WTC11 (cell line): ENCODE measurements at regions of chr5 and their contacts with region 1.

Region 1: DNA sequence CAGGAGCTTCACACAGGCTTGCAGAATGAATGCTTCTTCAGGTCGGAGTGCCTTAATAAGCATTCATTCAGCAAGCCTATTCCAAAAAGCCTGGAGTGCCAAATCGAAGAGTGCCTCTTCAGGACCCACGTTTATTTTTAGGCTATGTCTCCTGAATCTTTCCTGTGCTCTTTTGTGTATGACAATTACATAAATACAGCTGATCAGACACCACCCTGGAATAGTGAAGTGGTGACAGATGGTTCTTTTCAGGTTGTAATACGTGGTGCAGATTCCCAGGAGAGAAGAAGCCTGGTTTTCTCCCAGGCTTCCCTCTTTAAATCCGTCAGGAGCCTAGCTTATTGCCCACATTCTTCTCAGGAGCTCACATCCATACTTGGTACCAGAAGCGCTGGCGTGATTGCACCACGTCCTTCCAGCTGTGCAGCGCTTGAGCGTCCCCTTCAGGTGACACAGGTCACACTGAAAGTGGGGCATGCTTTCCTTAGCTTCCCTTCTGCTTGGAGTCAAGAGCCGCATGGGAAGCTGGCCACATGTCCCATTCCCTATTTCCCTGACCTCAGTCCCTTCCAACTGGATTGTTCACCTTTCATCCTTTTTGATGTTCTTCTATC is 123.1 kb downstream of the ADCY2 start:
- DNase-seq: peak; percentile 79
- ATAC-seq: peak; percentile 77
- H3K4me3 Mint-ChIP-seq: no peak overlapping the region
- H3K27ac Mint-ChIP-seq: peak overlapping the region; percentile 67
- H3K4me1 Mint-ChIP-seq: peaks cover 59% of the 10 kb centered on the region
- H3K27me3 Mint-ChIP-seq: no peaks in the 10 kb centered on the region
- CTCF ChIP-seq: peak; percentile 59

Region 2: GRCh38 chr5:7078901-7079300 is 440.2 kb before region 1 on chr5:
- CTCF ChIA-PET with region 1: interaction called, 15 read pairs
- POLR2A ChIA-PET with region 1: no interaction called
- DNase-seq: peak; percentile 50
- ATAC-seq: peak; percentile 68
- H3K4me3 Mint-ChIP-seq: peak overlapping the region; percentile 25; the same call in 1 of the 2 replicates
- H3K27ac Mint-ChIP-seq: 0 out of 2 replicates have a peak overlapping the region, but pooled peaks have one; percentile 12
- H3K4me1 Mint-ChIP-seq: peaks cover 50% of the 10 kb centered on the region
- H3K27me3 Mint-ChIP-seq: no peaks in the 10 kb centered on the region
- CTCF ChIP-seq: no peak

Region 3: DNA sequence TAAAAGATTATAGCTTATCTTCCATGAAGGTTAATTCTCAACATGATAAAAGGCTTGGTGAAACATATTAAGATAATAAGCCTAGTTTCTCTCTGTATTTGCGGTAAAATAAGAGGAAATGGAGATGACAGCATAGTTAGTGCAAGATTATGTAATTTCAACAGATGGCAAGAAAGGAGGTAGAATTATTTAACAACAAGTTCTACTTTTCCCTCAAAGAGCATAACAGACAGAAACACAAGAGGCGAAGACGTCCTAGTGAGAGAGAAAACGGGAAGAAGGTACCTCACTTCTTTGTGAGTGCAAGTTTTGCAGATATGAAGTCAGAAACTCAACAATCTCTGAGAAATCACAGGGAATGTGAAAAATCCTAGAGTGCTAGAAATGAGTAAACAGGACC is 267.9 kb before region 1 on chr5:
- CTCF ChIA-PET with region 1: no interaction called
- POLR2A ChIA-PET with region 1: no interaction called
- DNase-seq: no peak
- ATAC-seq: no peak
- H3K4me3 Mint-ChIP-seq: no peak overlapping the region
- H3K27ac Mint-ChIP-seq: no peak overlapping the region
- H3K4me1 Mint-ChIP-seq: peaks cover 6% of the 10 kb centered on the region; the same call in 1 of the 2 replicates
- H3K27me3 Mint-ChIP-seq: no peaks in the 10 kb centered on the region; the same call in 1 of the 2 replicates
- CTCF ChIP-seq: no peak

Region 4: DNA sequence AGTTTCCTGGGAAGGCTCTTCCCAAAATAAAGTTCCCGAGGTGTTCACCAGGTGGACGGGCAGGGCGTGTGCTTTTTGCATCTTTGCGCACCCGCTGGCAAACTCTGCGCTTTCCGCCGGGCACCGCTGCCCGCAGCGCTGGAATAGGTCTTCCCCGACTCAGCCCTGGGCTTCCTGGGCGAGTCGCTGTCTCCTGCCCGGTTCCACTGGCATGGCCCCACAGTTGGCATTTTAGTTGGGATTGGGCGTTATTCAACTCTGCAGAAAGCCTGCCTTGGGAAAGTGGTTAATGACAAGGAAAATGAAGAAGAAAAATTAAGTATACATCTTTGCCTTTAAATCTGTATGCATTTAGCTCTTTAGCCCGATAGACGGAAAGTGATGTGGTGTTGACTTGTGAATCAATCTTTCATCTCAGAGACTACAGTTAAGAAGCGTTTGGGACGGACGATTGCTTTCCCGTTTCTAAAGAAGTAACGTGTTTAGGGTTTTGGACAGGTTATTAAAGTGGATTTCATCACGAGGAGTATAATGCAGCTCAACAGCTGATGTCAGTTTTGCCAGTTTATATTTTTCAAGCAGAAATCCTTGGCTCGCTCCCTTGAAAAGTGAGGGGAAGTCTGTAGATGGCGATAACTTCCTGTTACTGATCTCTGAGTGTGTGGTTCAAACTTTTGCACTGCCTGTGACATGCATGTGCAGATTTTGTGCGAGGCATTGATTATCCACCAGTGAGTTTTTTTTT is 122.2 kb before region 1 on chr5:
- CTCF ChIA-PET with region 1: interaction called, 40 read pairs
- POLR2A ChIA-PET with region 1: interaction called, 3 read pairs
- DNase-seq: peak; percentile 27
- ATAC-seq: no peak
- H3K4me3 Mint-ChIP-seq: peak overlapping the region; percentile 90
- H3K27ac Mint-ChIP-seq: peak overlapping the region; percentile 73
- H3K4me1 Mint-ChIP-seq: peaks cover 72% of the 10 kb centered on the region
- H3K27me3 Mint-ChIP-seq: no peaks in the 10 kb centered on the region; the same call in 1 of the 2 replicates
- CTCF ChIP-seq: no peak

Region 5: DNA sequence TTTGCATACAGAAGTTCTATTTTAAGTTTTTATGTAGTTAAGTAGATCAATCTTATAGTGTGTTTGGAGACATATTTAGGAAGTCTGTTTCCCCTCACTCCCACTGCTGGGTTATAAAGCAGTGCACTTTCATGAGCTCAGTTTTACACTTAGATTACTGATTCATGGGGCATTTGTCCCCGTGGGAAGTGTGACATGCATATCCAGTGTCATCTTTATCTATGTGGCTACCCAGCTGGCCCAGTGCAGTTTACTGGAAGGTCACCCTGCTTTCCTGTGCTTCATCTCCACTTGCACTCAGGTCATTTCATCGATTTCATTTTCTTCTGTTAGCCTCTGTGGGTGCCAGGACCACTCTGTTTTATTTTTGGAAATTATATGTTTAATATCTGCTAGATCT is 74.0 kb before region 1 on chr5:
- CTCF ChIA-PET with region 1: interaction called, 10 read pairs
- POLR2A ChIA-PET with region 1: no interaction called
- DNase-seq: no peak
- ATAC-seq: no peak
- H3K4me3 Mint-ChIP-seq: no peak overlapping the region
- H3K27ac Mint-ChIP-seq: peak overlapping the region; percentile 46
- H3K4me1 Mint-ChIP-seq: peaks cover 36% of the 10 kb centered on the region
- H3K27me3 Mint-ChIP-seq: no peaks in the 10 kb centered on the region
- CTCF ChIP-seq: no peak

Region 6: DNA sequence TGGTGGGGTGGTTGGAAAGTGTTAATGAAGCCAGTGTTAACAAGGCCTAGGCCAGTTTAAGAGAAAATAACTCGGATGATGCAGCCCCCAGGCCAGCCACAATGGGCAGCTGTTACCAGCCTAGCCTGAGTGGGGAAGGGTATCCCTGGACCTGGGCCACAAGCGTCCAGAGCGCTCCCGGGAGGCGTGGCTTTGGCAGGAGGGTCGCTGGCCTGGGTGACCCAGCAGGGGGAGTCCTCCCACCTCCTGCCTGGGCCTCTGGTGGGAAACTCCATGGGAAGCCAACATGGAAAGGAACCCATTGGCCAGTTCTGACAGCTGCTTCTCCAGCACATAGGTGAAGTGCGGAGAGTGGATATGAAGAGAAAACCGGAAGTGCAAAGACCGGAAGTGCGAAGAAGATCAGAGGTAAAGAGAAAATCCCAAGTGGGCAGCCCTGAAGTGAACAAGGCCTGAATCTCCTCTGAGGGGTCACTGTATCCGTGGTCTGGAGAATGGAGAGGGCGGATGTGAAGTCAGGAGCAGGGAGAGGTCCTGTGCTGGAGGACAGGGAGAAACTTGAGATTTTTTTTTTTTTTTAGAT is 44.1 kb before region 1 on chr5:
- CTCF ChIA-PET with region 1: interaction called, 14 read pairs
- POLR2A ChIA-PET with region 1: no interaction called
- DNase-seq: peak; percentile 36
- ATAC-seq: peak; percentile 43
- H3K4me3 Mint-ChIP-seq: no peak overlapping the region
- H3K27ac Mint-ChIP-seq: peak overlapping the region; percentile 88
- H3K4me1 Mint-ChIP-seq: peaks cover 61% of the 10 kb centered on the region
- H3K27me3 Mint-ChIP-seq: no peaks in the 10 kb centered on the region
- CTCF ChIP-seq: no peak; the same call in 1 of the 2 replicates

Region 7: GRCh38 chr5:7501055-7501454 is 18.0 kb before region 1 on chr5:
- CTCF ChIA-PET with region 1: interaction called, 11 read pairs
- POLR2A ChIA-PET with region 1: no interaction called
- DNase-seq: no peak
- ATAC-seq: peak; percentile 14; the same call in 1 of the 2 replicates
- H3K4me3 Mint-ChIP-seq: no peak overlapping the region
- H3K27ac Mint-ChIP-seq: no peak overlapping the region
- H3K4me1 Mint-ChIP-seq: peaks cover 52% of the 10 kb centered on the region
- H3K27me3 Mint-ChIP-seq: no peaks in the 10 kb centered on the region
- CTCF ChIP-seq: no peak

Region 8: DNA sequence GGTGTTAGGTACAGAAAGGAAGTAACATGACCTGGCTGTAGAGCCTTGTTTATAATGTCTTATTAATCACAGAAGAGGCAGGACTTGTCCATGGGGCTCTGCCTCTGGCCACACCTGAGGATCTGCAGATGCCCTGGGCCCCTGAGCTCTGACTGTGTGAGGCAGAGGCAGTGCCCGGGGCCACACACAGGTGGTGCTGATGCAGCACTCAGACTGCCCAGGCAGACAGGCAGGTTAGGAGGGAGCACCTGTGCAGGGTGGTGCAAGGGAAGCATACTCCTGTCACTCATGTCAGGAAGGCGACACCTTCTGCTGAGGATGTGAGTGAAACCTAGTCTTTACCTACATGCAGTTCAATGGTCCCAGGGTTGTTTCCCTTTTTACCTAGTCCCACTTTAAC is 243.2 kb after region 1 on chr5:
- CTCF ChIA-PET with region 1: no interaction called
- POLR2A ChIA-PET with region 1: no interaction called
- DNase-seq: peak; percentile 56
- ATAC-seq: peak; percentile 89
- H3K4me3 Mint-ChIP-seq: no peak overlapping the region
- H3K27ac Mint-ChIP-seq: no peak overlapping the region
- H3K4me1 Mint-ChIP-seq: no peaks in the 10 kb centered on the region; the same call in 1 of the 2 replicates
- H3K27me3 Mint-ChIP-seq: no peaks in the 10 kb centered on the region
- CTCF ChIP-seq: no peak